BJ (cell line): ENCODE measurements at regions of chr22 and their contacts with region 1.

Region 1: DNA sequence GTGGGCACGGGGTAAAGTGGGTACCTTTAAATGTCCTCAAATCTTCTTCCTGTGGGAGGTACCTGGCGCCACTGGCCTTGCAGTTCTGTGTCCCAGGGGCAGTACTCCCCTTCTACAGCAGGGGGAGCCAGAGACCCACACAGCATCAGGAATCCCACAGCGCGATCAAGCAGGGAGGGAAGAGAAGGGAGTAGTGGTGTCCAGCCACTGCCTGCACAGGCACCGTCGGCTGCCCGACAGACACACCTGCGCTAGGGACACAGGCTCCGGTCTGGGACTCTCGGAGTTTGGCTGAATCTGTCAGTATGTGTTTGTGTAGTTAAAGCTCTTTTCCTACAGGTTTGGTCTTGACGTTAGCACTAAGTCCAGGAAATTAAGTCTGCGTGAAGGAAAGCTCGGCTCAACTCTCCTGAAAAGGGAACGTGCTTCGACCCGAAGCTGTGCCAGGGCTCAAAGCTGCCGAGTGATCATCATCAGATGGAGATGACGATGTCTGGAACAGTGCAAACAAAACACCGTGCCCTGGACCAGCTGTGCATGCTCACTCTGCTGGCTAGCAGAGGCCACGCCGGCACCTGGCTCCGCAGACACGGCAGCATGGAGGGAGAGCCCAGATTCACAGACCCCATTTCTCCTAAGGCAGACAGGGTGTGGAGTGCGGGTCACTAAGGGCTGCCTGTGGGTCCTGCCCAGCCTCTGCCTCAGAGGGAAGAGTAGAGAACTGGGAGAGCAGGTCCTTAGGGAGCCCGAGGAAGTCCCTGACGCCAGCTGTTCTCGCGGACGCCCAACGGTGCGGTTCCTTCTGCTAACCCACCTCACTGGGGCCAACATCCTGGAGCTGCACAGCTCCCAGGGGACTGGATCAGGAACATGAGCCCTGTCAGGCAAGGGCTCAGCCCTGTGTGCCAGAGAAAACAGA is 56.0 kb upstream of the BID start:
- DNase-seq: no peak
- H3K4me3 ChIP-seq: no peak overlapping the region
- H3K27me3 ChIP-seq: no peaks in the 10 kb centered on the region
- CTCF ChIP-seq: peak; percentile 99

Region 2: GRCh38 chr22:17891481-17892167 is 61.3 kb after region 1 on chr22:
- CTCF ChIA-PET with region 1: interaction called, 12 read pairs
- POLR2A ChIA-PET with region 1: no interaction called
- DNase-seq: no peak
- H3K4me3 ChIP-seq: no peak overlapping the region
- H3K27me3 ChIP-seq: no peaks in the 10 kb centered on the region
- CTCF ChIP-seq: peak; percentile 25; the same call in 1 of the 2 replicates

Region 3: DNA sequence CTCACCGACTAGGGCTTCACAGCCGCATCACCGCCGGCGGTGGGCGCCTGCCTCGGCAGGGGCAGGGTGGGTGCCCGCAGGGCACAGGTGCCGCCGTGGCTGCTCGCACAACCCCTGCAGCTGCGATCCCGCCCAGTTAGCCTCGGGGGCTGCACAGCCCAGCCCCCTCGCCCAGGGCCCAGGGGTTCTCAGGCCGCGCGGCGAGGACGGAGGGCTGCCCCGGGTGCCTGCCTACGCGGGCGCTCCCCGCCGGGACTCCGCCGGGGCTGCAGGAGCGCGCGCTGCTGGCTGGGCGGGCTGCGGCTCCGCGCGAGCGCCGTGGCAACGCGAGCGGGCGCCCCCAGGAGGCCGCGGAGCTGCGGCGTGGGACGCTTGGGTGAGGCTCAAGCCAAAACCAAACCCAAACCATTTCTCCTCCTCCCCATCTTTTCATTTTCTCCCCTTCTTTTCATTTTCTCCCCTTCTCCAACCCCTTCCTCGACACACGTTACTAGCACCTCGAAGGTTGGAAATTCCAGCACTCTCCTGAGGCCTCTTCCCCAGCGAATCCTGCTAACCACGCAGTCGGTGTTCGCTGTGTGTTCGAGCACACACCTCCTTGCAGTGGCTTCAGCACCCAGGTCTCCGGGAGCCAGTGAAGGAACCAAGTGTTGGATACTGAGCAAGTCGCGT is 194.1 kb after region 1 on chr22 and contains the start of gene MICAL3:
- CTCF ChIA-PET with region 1: interaction called, 19 read pairs
- POLR2A ChIA-PET with region 1: no interaction called
- DNase-seq: no peak
- H3K4me3 ChIP-seq: peak within 1 kb of the TSS; percentile 67
- H3K27me3 ChIP-seq: no peaks in the 10 kb centered on the region
- CTCF ChIP-seq: peak; percentile 61
- polyA plus RNA-seq, gene MICAL3: 13.4 and 16.4 TPM in 2 replicates

Region 4: DNA sequence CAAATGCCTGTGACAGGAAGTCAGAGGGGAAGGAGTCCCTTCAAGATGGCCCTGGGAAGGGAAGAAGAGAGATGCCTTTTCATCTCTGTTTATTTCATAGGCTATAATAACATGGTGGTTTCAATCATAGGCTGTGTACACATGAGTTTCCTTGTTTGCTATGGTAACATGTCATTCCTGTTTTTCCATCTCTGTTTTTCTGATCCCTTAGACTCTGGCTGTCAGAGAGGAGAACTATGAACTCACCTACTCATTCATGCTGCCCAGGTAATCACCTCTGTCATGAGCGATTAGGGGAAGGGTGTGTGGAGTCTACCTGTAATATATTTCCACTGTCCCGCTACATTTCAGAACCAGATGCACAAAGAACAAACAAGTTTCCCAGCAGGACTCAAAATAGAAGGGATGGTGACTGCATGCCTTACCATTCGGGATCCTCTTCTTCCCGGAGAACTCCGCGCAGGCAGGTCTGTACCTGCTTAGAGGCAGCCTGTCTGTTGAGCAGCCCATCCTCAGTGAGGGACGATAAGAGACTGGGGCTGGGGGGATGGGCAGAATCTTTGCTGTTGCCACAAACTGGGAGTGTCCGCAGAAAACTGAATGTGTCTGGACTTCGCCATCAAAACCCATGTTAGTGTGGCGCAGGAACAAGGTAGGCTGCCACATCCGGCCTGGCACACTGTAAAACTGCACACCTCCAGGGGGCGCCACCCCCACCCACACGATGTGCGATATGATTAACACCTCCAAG is 240.4 kb after region 1 on chr22:
- CTCF ChIA-PET with region 1: interaction called, 172 read pairs
- POLR2A ChIA-PET with region 1: no interaction called
- DNase-seq: no peak
- H3K4me3 ChIP-seq: no peak overlapping the region
- H3K27me3 ChIP-seq: no peaks in the 10 kb centered on the region
- CTCF ChIP-seq: peak; percentile 38

Region 5: GRCh38 chr22:18152519-18152918 is 322.2 kb after region 1 on chr22:
- CTCF ChIA-PET with region 1: interaction called, 11 read pairs
- POLR2A ChIA-PET with region 1: no interaction called
- DNase-seq: no peak
- H3K4me3 ChIP-seq: no peak overlapping the region
- H3K27me3 ChIP-seq: no peaks in the 10 kb centered on the region
- CTCF ChIP-seq: no peak